Activated T-helper 1 cell treated with anti-CD3 and anti-CD28 coated beads, Interleukin-12 subunit alpha, Interleukin-12 subunit beta, Interleukin-2, Interleukin-4 antibody, amounts not matched to agents 30 ng/mL and 10 ng/mL and 1 ng/mL, durations not matched to agents 14 hours and 24 hours and 36 hours (primary cell): ENCODE measurements at regions of chr7 and their contacts with region 1.

Region 1: DNA sequence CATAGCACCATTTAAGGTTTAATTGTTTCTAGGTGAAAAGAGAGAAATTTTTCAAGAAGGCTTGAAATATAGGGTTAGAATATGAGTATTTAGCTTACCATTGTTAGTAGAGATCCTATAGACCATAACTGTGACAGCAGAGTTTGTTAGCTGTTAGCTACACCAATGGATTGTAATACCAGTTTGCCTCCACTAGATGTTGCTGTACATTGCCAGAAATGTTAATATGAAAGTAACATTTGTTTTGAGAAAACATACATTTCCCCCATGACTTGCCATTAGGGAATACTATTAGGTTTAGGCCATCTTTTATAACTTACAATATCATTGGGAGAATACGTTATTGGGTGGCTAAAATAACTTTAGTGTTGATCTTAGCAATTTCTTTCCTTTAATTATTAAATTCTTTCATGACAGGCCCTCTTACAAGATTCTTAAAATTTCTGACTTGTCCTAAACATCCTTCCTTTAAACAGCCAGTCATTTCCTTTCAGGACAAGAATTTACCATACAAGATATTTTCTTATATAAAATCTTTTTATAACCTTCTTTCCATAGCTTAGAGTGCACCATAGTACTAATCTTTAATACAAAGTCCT is 39.5 kb downstream of the ZNF117 start:
- DNase-seq: no peak
- H3K4me3 Mint-ChIP-seq: no peak overlapping the region
- H3K27ac Mint-ChIP-seq: no peak overlapping the region
- H3K4me1 Mint-ChIP-seq: no peaks in the 10 kb centered on the region
- H3K27me3 Mint-ChIP-seq: peaks cover 33% of the 10 kb centered on the region

Region 2: GRCh38 chr7:65216459-65216858 is 265.1 kb after region 1 on chr7:
- intact Hi-C with region 1: loop called (anchors 1 kb)
- DNase-seq: peak; percentile 27
- H3K4me3 Mint-ChIP-seq: no peak overlapping the region
- H3K27ac Mint-ChIP-seq: no peak overlapping the region
- H3K4me1 Mint-ChIP-seq: peaks cover 6% of the 10 kb centered on the region
- H3K27me3 Mint-ChIP-seq: no peaks in the 10 kb centered on the region

Region 3: GRCh38 chr7:65307651-65308299 is 356.4 kb after region 1 on chr7:
- intact Hi-C with region 1: loop called (anchors 1 kb)
- DNase-seq: no peak
- H3K4me3 Mint-ChIP-seq: no peak overlapping the region
- H3K27ac Mint-ChIP-seq: no peak overlapping the region
- H3K4me1 Mint-ChIP-seq: no peaks in the 10 kb centered on the region
- H3K27me3 Mint-ChIP-seq: no peaks in the 10 kb centered on the region